Mammary epithelial cell (primary cell): ENCODE measurements at regions of chr14 and their contacts with region 1.

Region 1: DNA sequence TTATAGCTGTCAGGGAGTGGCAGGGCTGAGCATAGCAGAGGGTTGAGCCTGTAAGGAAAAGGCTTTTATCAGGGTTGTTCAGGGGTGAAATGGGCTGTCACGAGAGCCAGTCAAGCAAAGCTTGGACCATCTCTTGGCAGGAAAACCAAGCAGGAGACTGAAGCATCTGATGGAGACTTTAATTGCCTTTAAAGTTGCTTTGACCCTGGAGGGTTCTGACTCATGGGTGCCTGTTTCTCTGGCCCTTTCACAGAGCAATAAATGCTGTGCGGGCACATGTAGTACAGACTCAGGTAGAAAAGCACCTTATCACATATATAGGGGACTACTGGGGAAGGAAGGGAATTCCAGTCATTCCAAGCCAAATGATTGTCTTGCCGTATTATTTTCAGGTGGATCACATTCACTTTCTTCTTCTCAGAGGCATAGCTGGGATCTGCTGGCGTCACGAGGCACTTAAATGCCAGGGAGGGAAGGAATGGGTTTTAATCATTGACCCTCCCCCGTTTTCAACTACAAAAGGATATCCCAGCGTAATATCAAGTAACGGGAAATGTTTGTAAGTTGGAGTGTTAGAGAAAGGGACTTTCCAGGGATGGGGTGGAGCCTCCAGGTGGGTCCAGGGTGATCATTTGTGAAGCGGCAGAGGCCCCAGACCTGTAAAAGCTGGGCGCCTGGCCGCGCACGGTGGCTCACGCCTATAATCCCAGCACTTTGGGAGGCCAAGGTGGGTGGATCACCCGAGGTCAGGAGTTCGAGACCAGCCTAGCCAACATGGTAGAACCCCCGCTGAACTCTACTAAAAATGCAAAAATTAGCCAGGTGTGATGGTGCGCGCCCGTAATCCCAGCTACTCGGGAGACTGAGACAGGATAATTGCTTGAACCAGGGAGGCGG is 34.9 kb downstream of the PLEKHD1 start:
- DNase-seq: peak; percentile 29
- H3K4me3 ChIP-seq: no peak overlapping the region
- H3K27ac ChIP-seq: no peak overlapping the region
- H3K4me1 ChIP-seq: no peaks in the 10 kb centered on the region
- H3K27me3 ChIP-seq: peaks cover 2% of the 10 kb centered on the region
- CTCF ChIP-seq: no peak

Region 2: DNA sequence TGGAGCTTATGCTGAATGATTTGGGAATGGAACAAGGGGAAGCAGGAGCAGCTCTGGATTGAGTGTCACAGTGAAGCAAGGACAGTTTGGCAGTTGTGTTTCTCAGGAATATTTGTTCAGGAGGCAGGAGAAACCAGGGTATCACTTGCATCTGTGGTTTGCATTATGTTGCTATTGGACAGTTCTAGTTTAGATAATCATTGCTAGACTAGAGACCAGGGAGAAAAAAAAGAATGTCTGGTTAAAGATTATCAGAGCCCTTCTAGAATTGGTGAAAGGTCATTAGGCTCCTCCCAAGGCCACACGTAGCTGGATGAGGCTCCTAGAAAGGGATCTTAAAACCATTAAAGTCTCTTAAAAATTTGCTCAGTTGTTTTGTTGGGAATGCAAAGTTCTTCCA is 230.5 kb after region 1 on chr14:
- CTCF ChIA-PET with region 1: no interaction called
- dilution Hi-C with region 1: loop called (anchors 10 kb)
- in situ Hi-C with region 1: no loop called
- intact Hi-C with region 1: no loop called
- DNase-seq: no peak
- H3K4me3 ChIP-seq: no peak overlapping the region
- H3K27ac ChIP-seq: no peak overlapping the region
- H3K4me1 ChIP-seq: no peaks in the 10 kb centered on the region
- H3K27me3 ChIP-seq: no peaks in the 10 kb centered on the region
- CTCF ChIP-seq: no peak